ENCODE measurements at regions of chr1 and their contacts with region 1.

Region 1: GRCh38 chr1:167066333-167067122 is 23.6 kb downstream of the GPA33 start:
- DNase-seq: peak; percentile 68
- H3K4me3 Mint-ChIP-seq: peak overlapping the region; percentile 31
- H3K27ac Mint-ChIP-seq: no peak overlapping the region
- H3K4me1 Mint-ChIP-seq: no peaks in the 10 kb centered on the region
- H3K27me3 Mint-ChIP-seq: no peaks in the 10 kb centered on the region

Region 2: DNA sequence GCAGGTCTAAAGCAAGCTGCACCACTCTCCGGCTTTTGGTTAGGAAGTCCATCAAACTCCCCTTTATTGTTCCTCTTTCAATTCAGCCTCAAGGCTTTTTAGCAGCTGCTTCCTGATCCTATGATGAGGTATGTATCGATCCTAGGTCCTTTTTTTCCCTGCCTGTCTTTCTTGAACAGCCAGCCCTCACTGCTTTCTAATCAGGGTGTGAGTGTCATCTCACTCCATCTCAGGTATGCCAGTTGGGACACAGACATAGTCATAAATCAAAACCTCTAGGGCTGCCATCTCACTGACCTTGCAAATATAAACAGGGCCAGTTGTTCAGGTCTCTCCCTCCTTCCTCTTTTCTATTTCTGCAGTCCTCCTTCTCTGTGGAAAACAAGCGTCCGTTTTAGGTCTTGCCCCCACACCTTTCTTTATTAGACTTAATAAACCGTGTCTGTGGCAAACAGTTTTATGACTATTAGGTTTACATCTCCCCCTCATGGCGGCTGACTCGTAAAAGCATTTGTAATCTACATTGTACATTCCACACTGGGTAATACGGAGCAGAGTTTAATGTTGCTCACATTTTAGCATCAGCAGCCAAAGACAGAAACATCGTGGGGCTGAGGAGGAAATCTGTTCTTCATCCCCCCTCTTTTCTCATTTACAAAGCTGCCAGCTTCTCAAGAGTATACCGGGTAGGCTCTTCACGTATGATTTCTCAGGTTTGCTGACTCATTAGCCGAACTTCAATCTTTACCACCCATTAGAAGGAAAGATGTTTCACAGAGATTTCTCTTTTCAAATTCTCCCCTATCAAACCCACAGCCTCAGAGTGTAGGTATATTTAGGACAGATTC is 39.0 kb after region 1 on chr1:
- intact Hi-C with region 1: loop called (anchors 5 kb)
- DNase-seq: no peak
- H3K4me3 Mint-ChIP-seq: peak overlapping the region; percentile 4
- H3K27ac Mint-ChIP-seq: no peak overlapping the region
- H3K4me1 Mint-ChIP-seq: peaks cover 66% of the 10 kb centered on the region
- H3K27me3 Mint-ChIP-seq: no peaks in the 10 kb centered on the region

Region 3: GRCh38 chr1:167128261-167129227 is 62.0 kb after region 1 on chr1:
- intact Hi-C with region 1: loop called (anchors 1 kb)
- DNase-seq: no peak
- H3K4me3 Mint-ChIP-seq: no peak overlapping the region
- H3K27ac Mint-ChIP-seq: no peak overlapping the region
- H3K4me1 Mint-ChIP-seq: no peaks in the 10 kb centered on the region
- H3K27me3 Mint-ChIP-seq: peaks cover 22% of the 10 kb centered on the region

Region 4: GRCh38 chr1:167342846-167343245 is 276.3 kb after region 1 on chr1:
- intact Hi-C with region 1: loop called (anchors 5 kb)
- DNase-seq: no peak
- H3K4me3 Mint-ChIP-seq: no peak overlapping the region
- H3K27ac Mint-ChIP-seq: no peak overlapping the region
- H3K4me1 Mint-ChIP-seq: peaks cover 5% of the 10 kb centered on the region
- H3K27me3 Mint-ChIP-seq: no peaks in the 10 kb centered on the region

Region 5: DNA sequence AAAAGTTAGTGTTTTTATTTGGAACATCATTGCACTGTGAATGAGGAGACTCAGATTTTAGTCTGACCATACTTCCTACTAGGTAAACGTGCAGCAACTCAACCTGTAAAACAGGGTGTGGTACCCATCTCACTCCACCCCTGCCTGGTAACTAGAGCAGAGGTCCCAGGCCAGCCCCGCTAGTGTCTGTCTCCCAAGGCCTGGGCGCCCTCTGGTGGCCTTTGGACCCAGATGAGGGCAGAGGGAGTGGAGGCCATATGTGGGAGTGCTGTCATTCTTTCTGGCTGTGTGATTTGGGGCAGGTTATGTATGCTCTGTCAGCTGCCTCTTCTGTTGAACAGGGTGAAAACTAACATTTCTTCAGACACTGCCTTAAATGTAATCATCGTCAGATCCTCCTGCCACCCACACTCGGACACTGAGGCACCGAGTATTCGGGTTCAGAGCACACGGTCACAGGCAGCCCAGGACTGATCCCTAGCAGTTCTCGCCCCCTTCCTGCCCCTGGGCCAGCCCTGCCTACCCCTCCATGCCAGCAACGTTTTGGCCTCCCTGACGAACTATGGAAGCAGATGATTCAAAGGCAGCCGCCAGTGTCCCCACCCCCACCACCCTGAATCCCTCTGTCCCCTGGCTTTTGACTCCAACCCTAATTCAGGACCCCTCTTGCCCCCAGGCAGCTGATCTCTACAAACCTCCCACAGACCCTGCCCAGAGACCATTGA is 375.8 kb after region 1 on chr1:
- intact Hi-C with region 1: loop called (anchors 1 kb)
- DNase-seq: peak; percentile 79
- H3K4me3 Mint-ChIP-seq: no peak overlapping the region
- H3K27ac Mint-ChIP-seq: peak overlapping the region; percentile 61
- H3K4me1 Mint-ChIP-seq: peaks cover 78% of the 10 kb centered on the region
- H3K27me3 Mint-ChIP-seq: no peaks in the 10 kb centered on the region

Region 6: GRCh38 chr1:167533851-167534300 is 467.3 kb after region 1 on chr1:
- intact Hi-C with region 1: loop called (anchors 1 kb)
- DNase-seq: peak; percentile 51
- H3K4me3 Mint-ChIP-seq: no peak overlapping the region
- H3K27ac Mint-ChIP-seq: no peak overlapping the region
- H3K4me1 Mint-ChIP-seq: peaks cover 5% of the 10 kb centered on the region
- H3K27me3 Mint-ChIP-seq: peaks cover 7% of the 10 kb centered on the region

Measured in activated T-helper 1 cell treated with anti-CD3 and anti-CD28 coated beads, Interleukin-12 subunit alpha, Interleukin-12 subunit beta, Interleukin-2, Interleukin-4 antibody, amounts not matched to agents 30 ng/mL and 10 ng/mL and 1 ng/mL, durations not matched to agents 14 hours and 24 hours and 36 hours (primary cell).